HCT116 (cell line): ENCODE measurements at regions of chr18 and their contacts with region 1.

Region 1: GRCh38 chr18:30971338-30971956 is 71.1 kb downstream of the DSC3 start:
- DNase-seq: peak; percentile 34
- ATAC-seq: peak; percentile 75
- H3K4me3 ChIP-seq: no peak overlapping the region
- H3K27ac ChIP-seq: no peak overlapping the region
- H3K4me1 ChIP-seq: peaks cover 0 to 4% of the 10 kb centered on the region in 2 experiments; a peak in 2 of 4 replicates
- H3K27me3 ChIP-seq: no peaks in the 10 kb centered on the region
- CTCF ChIP-seq: peak; percentile 25 to 66 (median 33); a peak in 4 of 6 replicates
- POLR2A ChIP-seq: no peak
- RAD21 ChIP-seq: peak; percentile 48

Region 2: GRCh38 chr18:29874519-29875098 is 1096.8 kb before region 1 on chr18:
- CTCF ChIA-PET with region 1: interaction called, 5 read pairs
- POLR2A ChIA-PET with region 1: no interaction called
- RAD21 ChIA-PET with region 1: no interaction called
- intact Hi-C with region 1: loop called (anchors 5 kb)
- DNase-seq: peak; percentile 10
- ATAC-seq: no peak
- H3K4me3 ChIP-seq: no peak overlapping the region
- H3K27ac ChIP-seq: no peak overlapping the region
- H3K4me1 ChIP-seq: no peaks in the 10 kb centered on the region
- H3K27me3 ChIP-seq: no peaks in the 10 kb centered on the region
- CTCF ChIP-seq: peak; percentile 31 to 63 (median 41); a peak in 4 of 6 replicates
- POLR2A ChIP-seq: no peak
- RAD21 ChIP-seq: peak; percentile 62

Region 3: DNA sequence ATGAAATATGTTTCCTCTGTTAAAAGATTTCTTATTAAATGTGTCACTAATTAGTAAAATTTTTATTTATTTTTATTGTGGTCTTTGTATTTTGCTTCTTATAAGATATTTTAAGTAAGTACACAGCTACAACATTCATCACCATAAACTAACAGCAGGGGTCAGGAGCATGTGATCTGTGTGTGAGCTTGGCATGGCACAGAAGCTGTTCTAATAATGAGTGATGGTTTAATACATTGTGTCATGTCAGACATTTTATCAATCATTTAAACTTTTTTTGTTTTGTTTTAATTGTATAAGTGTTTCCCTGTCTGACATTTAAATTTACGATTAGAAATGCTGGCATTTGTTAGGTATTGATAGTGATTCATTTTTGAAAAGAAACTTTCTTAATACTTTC is 514.3 kb before region 1 on chr18:
- CTCF ChIA-PET with region 1: no interaction called
- POLR2A ChIA-PET with region 1: no interaction called
- RAD21 ChIA-PET with region 1: no interaction called
- intact Hi-C with region 1: no loop called
- DNase-seq: peak; percentile 1
- ATAC-seq: no peak
- H3K4me3 ChIP-seq: no peak overlapping the region
- H3K27ac ChIP-seq: no peak overlapping the region
- H3K4me1 ChIP-seq: no peaks in the 10 kb centered on the region
- H3K27me3 ChIP-seq: no peaks in the 10 kb centered on the region
- CTCF ChIP-seq: no peak
- POLR2A ChIP-seq: no peak
- RAD21 ChIP-seq: no peak

Region 4: DNA sequence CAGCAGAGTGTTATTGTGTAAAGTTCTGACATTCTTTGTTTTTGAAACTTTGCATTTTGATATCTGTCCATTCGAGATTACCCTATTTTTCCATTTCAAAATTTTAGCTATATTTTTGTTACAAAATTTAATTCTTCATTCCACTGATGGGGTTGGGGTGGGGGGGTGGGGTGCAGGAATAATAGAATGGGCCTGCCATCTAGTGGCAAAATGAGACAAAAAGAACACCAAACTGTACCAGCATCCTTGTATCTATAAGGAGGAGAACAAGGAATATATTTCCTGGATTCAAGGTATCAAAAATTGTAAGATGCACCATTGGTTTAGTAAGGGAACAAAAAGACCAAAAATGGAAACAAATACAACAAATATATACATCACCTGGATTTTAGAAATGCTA is 592.3 kb after region 1 on chr18:
- CTCF ChIA-PET with region 1: interaction called, 10 read pairs
- POLR2A ChIA-PET with region 1: no interaction called
- RAD21 ChIA-PET with region 1: no interaction called
- intact Hi-C with region 1: loop called (anchors 2 kb)
- DNase-seq: no peak
- ATAC-seq: no peak; the same call in 1 of the 2 replicates
- H3K4me3 ChIP-seq: no peak overlapping the region
- H3K27ac ChIP-seq: no peak overlapping the region
- H3K4me1 ChIP-seq: no peaks in the 10 kb centered on the region
- H3K27me3 ChIP-seq: no peaks in the 10 kb centered on the region
- CTCF ChIP-seq: peak in 2 of 3 experiments; percentile 22 to 30; a peak in 2 of 6 replicates
- POLR2A ChIP-seq: no peak
- RAD21 ChIP-seq: peak; percentile 43

Region 5: GRCh38 chr18:31722369-31722957 is 751.0 kb after region 1 on chr18:
- CTCF ChIA-PET with region 1: no interaction called
- POLR2A ChIA-PET with region 1: no interaction called
- RAD21 ChIA-PET with region 1: no interaction called
- intact Hi-C with region 1: loop called (anchors 10 kb)
- DNase-seq: peak; percentile 66
- ATAC-seq: peak; percentile 100
- H3K4me3 ChIP-seq: no peak overlapping the region
- H3K27ac ChIP-seq: no peak overlapping the region
- H3K4me1 ChIP-seq: no peaks in the 10 kb centered on the region
- H3K27me3 ChIP-seq: no peaks in the 10 kb centered on the region
- CTCF ChIP-seq: peak; percentile 68 to 91 (median 89); a peak in 5 of 6 replicates
- POLR2A ChIP-seq: no peak
- RAD21 ChIP-seq: peak; percentile 82

Region 6: GRCh38 chr18:31819106-31819924 is 847.9 kb after region 1 on chr18:
- CTCF ChIA-PET with region 1: no interaction called
- POLR2A ChIA-PET with region 1: no interaction called
- RAD21 ChIA-PET with region 1: no interaction called
- intact Hi-C with region 1: loop called (anchors 2 kb)
- DNase-seq: peak; percentile 39
- ATAC-seq: peak; percentile 84
- H3K4me3 ChIP-seq: no peak overlapping the region
- H3K27ac ChIP-seq: no peak overlapping the region
- H3K4me1 ChIP-seq: no peaks in the 10 kb centered on the region
- H3K27me3 ChIP-seq: no peaks in the 10 kb centered on the region
- CTCF ChIP-seq: peak; percentile 68 to 82 (median 70); a peak in 5 of 6 replicates
- POLR2A ChIP-seq: no peak
- RAD21 ChIP-seq: peak; percentile 82